CD8-positive, alpha-beta memory T cell (primary cell): ENCODE measurements at regions of chr10 and their contacts with region 1.

Region 1: GRCh38 chr10:97196223-97197029 is 10.7 kb upstream of the SLIT1 start:
- DNase-seq: peak; percentile 42 to 75 (median 64)
- H3K4me3 ChIP-seq: peak overlapping the region; percentile 68
- H3K4me3 Mint-ChIP-seq: peak overlapping the region; percentile 81 to 94 (median 85)
- H3K27ac ChIP-seq: no peak overlapping the region
- H3K27ac Mint-ChIP-seq: peak overlapping the region in 2 of 8 donors; percentile 4 to 81
- H3K4me1 ChIP-seq: peaks cover 5% of the 10 kb centered on the region
- H3K4me1 Mint-ChIP-seq: peaks cover 10 to 18% (median 13%) of the 10 kb centered on the region in 3 donors
- H3K27me3 ChIP-seq: peaks cover 3% of the 10 kb centered on the region
- H3K27me3 Mint-ChIP-seq: peaks cover 6 to 39% of the 10 kb centered on the region in 2 donors

Region 2: GRCh38 chr10:97037365-97038361 is 158.8 kb before region 1 on chr10:
- CTCF ChIA-PET with region 1: interaction called, 15 read pairs
- POLR2A ChIA-PET with region 1: no interaction called
- DNase-seq: peak; percentile 42 to 75 (median 50)
- H3K4me3 ChIP-seq: peak overlapping the region; percentile 68
- H3K4me3 Mint-ChIP-seq: peak overlapping the region; percentile 38 to 88 (median 77)
- H3K27ac ChIP-seq: no peak overlapping the region
- H3K27ac Mint-ChIP-seq: peak overlapping the region in 4 of 8 donors; percentile 32 to 90 (median 63)
- H3K4me1 ChIP-seq: no peaks in the 10 kb centered on the region
- H3K4me1 Mint-ChIP-seq: peaks cover 7 to 17% (median 10%) of the 10 kb centered on the region in 3 donors
- H3K27me3 ChIP-seq: no peaks in the 10 kb centered on the region
- H3K27me3 Mint-ChIP-seq: peaks cover 6 to 14% of the 10 kb centered on the region in 2 donors

Region 3: DNA sequence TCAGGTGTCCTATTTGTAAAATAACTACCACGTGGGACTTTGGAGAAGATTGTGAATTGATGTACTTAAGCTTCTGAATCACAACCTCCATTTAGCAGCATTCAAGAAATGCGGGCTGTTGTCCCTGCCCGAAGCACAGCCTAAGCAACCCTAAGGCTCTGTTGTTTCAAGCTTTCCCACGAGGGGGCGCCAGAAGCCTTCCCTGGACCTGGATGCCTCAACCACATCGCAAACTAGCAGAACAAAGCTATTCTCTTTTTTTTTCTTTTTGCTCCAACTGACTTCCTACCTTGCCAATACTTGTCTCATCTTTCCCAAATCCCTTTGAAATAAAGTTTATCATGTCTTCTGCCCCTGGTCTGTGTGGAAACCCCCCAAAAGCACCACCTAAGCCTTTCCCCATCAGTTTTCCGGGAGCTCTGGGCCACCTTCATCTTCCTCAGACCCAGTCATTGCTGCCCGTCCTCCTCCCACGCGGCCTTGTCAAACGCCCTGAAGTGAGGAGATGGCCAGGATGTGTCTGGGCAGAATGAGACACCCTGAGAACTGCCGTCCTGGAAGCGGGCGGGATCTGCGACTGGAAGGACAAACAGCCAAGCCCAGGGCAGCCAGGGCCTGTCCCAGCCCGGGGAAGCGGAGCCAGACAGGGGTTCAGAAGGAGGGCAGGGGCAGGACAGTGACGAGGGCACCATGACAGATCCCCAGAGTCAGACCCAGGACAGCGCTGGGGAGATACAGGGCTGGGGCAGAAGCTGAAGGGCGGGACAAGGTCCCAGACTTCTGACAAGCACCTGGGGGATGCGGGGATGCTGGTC is 123.4 kb before region 1 on chr10:
- CTCF ChIA-PET with region 1: interaction called, 209 read pairs
- POLR2A ChIA-PET with region 1: no interaction called
- DNase-seq: peak; percentile 65 to 85 (median 72)
- H3K4me3 ChIP-seq: no peak overlapping the region
- H3K4me3 Mint-ChIP-seq: no peak overlapping the region
- H3K27ac ChIP-seq: no peak overlapping the region
- H3K27ac Mint-ChIP-seq: no peak overlapping the region
- H3K4me1 ChIP-seq: no peaks in the 10 kb centered on the region
- H3K4me1 Mint-ChIP-seq: peaks cover 5 to 12% (median 8%) of the 10 kb centered on the region in 3 donors
- H3K27me3 ChIP-seq: peaks cover 4% of the 10 kb centered on the region
- H3K27me3 Mint-ChIP-seq: peaks cover 9 to 41% of the 10 kb centered on the region in 2 donors

Region 4: DNA sequence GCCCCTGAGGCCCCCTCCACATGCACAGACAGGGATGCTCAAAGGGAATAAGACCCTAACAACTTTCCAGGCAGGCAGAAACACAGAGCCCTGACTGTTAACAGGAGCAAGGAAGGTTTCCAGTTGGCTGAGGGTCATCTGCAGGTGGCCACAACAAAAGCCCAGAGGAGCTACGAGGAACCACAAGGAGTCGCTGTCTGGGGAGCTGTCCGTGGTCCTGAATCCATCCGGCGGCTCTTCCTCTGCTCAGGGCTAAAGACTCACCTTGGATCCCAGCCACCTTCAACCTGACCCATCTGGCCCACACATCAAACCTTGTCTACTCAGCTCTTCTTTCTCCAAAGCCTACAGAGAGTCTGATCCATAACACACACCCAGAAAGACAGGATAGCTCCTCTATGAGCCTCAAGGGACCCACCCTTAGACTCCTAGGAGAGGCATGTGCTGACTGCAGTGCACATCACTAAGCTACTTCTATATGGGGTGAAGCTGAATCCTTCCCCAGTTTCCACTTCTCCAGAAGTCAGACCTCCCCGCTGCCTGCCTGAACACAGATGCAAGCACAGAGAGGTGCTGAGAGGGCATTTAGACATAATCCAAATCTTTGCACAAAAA is 114.7 kb before region 1 on chr10:
- CTCF ChIA-PET with region 1: interaction called, 209 read pairs
- POLR2A ChIA-PET with region 1: no interaction called
- DNase-seq: peak; percentile 31 to 72 (median 48)
- H3K4me3 ChIP-seq: no peak overlapping the region
- H3K4me3 Mint-ChIP-seq: no peak overlapping the region
- H3K27ac ChIP-seq: no peak overlapping the region
- H3K27ac Mint-ChIP-seq: peak overlapping the region in 1 of 8 donors; percentile 40
- H3K4me1 ChIP-seq: no peaks in the 10 kb centered on the region
- H3K4me1 Mint-ChIP-seq: no peaks in the 10 kb centered on the region
- H3K27me3 ChIP-seq: no peaks in the 10 kb centered on the region
- H3K27me3 Mint-ChIP-seq: peaks cover 10 to 55% of the 10 kb centered on the region in 2 donors